PC-9 (cell line): ENCODE measurements at regions of chr7 and their contacts with region 1.

Region 1: DNA sequence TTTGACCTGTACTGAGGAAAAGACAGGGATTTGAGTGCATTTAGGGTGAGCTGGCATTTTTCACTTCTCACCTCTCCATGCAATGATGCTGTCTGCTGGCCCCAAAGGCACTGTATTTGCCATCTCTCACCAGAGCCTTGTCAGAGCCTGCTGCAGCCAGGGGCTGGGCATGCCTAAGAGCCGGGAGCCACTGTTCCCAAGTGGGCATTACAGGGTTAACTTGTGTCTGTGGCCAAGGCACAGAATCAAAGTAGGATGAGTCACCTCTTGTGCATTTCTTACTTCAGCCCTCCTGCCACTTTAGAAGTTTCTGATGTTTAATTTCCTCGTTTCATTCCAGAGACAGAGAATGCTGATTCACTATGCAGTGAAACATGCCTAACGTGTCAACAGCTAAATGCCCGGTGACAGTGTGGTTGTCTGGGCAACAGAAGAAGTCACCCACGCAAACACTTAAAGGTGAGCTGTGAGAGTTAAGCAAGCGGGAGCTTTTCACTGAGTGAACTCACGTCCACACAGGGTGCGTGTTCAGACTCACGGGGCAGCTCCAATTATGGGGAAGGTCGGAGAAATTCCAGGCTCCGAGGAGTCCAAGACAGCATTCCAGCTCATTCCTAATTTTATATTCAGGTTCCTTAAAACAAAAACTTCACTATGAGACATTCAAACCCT is 57.1 kb upstream of the IGFBP3 start:
- DNase-seq: peak; percentile 91 to 100
- H3K4me3 ChIP-seq: peak overlapping the region; percentile 23; the same call in 1 of the 2 replicates
- H3K27ac ChIP-seq: peak overlapping the region; percentile 97
- H3K4me1 ChIP-seq: peaks cover 52% of the 10 kb centered on the region
- H3K27me3 ChIP-seq: no peaks in the 10 kb centered on the region
- CTCF ChIP-seq: no peak

Region 2: DNA sequence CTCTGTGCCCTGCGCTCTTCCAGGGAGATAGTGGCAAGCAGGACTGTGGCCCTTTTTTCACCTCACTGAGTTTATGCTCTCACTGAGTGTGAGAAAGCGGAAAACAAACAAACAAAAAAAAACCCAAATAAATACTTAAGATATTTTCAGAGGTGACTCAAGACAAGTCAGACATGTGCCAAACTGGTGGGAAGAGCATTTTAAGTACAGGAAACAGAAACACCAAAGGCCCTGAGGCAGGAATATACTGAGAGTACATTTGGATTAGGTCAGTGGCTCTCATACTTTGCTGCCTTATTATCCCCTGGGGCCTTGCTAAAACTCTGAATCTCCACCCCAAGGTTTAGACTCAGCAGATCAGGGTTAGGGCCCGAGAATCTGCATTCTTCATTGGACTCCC is 54.8 kb after region 1 on chr7:
- CTCF ChIA-PET with region 1: no interaction called
- POLR2A ChIA-PET with region 1: interaction called, 6 read pairs
- intact Hi-C with region 1: loop called (anchors 1 kb)
- DNase-seq: peak; percentile 54 to 99
- H3K4me3 ChIP-seq: no peak overlapping the region; the same call in 1 of the 2 replicates
- H3K27ac ChIP-seq: peak overlapping the region; percentile 92
- H3K4me1 ChIP-seq: peaks cover 58% of the 10 kb centered on the region
- H3K27me3 ChIP-seq: no peaks in the 10 kb centered on the region
- CTCF ChIP-seq: no peak

Region 3: DNA sequence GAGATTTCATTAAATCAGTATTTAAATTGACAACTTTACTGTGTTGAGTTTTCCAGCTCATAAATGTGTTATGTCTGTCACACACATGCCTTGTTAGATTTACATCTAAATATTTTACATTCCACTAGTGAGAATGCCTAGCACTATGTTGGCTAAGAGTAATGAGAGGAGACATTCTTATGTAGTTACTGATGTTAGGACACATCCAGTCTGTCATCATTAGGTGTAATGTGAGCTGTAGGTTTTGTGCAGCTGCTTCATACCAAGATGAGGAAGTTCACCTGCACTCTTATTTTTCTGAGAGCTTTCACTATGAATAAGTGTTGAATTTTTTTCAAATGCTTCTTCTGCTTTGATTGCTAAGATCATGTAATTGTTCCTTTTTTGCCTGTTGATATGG is 160.9 kb after region 1 on chr7:
- CTCF ChIA-PET with region 1: interaction called, 9 read pairs
- POLR2A ChIA-PET with region 1: interaction called, 4 read pairs
- intact Hi-C with region 1: loop called (anchors 1 kb)
- DNase-seq: peak; percentile 40 to 100
- H3K4me3 ChIP-seq: no peak overlapping the region
- H3K27ac ChIP-seq: peak overlapping the region; percentile 83
- H3K4me1 ChIP-seq: peaks cover 29% of the 10 kb centered on the region
- H3K27me3 ChIP-seq: no peaks in the 10 kb centered on the region
- CTCF ChIP-seq: no peak

Region 4: DNA sequence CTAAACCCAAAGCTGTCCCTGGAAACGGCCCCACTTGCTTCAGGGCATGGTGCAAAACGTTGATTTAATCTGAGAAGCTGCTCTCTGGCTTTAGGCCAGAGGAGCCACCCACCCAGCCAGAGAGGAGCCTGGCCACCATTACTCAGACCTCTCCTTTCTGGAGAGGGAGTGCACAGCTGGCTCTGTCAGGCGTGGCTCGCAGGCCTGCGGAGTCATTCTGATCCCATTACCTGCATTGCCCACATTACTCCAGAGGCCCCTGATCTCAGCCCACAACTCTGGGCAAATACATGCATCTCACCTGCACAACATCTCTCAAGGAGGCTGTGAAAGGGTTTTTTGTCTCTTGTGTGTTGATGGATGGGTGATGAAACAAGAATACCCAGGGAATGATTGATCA is 312.9 kb after region 1 on chr7:
- CTCF ChIA-PET with region 1: no interaction called
- POLR2A ChIA-PET with region 1: interaction called, 4 read pairs
- intact Hi-C with region 1: loop called (anchors 2 kb)
- DNase-seq: peak; percentile 72 to 83
- H3K4me3 ChIP-seq: no peak overlapping the region
- H3K27ac ChIP-seq: peak overlapping the region; percentile 77
- H3K4me1 ChIP-seq: peaks cover 30% of the 10 kb centered on the region
- H3K27me3 ChIP-seq: no peaks in the 10 kb centered on the region
- CTCF ChIP-seq: no peak